Right ventricle myocardium inferior (tissue), 1 donor: ENCODE measurements at regions of chr17 and their contacts with region 1.

Region 1: DNA sequence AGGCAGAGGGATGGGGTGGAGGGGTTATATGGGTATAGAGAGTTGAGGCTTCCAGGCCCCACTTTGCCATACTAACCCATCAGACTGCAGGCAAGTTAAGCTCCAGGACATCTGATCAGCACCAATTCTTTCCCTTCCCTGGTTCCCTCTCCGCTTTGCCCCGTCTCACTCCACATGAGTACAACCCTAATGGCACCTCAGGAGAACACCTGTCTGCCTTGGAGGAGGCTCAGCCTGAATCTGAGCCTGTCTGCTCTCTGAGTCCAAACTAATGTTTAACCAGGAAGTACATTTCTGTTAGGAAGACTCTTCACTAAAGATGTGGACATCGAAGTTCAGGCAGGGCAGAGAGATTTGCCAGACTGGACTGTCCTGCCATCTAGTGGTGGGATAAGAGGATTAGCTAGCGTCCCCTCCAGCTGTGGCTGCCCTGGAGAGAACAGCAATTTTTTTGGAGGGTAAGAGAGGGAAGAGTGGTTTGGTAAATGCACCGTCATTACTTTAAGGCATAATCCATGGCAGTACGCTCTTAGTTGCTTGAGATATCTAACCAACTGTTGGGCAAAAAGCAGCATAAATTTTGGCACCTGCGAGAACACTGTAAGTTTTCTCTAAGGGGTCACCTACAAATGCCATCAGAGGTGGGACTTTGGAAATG is 29.2 kb upstream of the LRRC75A start:
- DNase-seq: peak; percentile 62
- ATAC-seq: peak; percentile 93

Region 2: GRCh38 chr17:16363749-16364536 is 157.3 kb before region 1 on chr17:
- intact Hi-C with region 1: loop called (anchors 2 kb)
- DNase-seq: peak; percentile 79
- ATAC-seq: peak; percentile 78

Region 3: DNA sequence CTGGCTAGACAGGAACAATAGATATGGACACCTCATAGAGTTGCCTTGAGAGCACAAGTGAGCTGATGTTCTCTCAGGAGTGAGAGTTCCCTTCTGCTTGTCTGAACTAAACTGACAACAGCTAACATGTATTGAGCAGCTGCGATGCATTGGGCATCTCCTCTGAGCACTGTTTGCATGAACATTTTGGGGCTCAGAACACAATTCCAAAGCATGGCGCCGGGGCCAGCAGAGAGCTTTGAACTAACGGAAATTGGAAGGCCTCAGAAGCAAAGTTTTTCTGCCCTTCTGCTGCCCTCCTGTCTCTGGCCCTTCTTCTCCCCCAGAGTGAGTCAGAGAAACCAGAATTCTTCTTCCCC is 67.7 kb before region 1 on chr17:
- intact Hi-C with region 1: loop called (anchors 1 kb)
- DNase-seq: no peak
- ATAC-seq: no peak

Region 4: GRCh38 chr17:16491703-16492612 is 29.2 kb before region 1 on chr17 and contains the start of gene LRRC75A:
- intact Hi-C with region 1: no loop called
- DNase-seq: peak; percentile 76
- ATAC-seq: peak; percentile 85
- total RNA-seq, gene LRRC75A: 1.1 TPM